ENCODE measurements at regions of chrX and their contacts with region 1.

Region 1: DNA sequence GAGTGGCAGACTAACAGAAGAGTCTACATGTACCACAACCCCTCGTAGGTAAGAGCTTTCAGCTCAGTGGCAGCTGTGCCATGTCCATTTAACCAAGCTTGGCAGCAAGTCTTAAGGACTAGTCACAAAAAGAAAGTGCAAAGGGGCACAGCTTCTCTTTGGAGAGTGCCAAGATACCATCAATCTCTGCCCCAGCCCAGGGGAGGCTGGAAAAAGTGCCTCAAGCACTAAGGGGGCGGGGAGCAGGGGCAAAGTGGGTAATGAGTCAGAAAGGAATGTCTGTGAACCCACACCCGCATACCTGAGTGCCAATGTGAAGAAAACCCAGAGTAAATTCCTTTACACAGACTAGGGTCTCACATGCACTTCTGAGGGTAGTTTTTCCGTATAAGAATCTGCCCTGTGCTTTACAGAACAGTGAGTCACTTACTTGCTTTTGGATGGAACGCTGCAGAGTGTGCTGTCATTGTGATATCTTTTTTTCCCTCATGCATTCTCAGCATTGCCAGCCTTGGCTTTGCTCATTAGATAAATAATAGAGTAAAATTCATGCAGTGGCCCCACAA is 219.8 kb downstream of the ZNF674 start:
- DNase-seq: peak; percentile 84 to 90
- H3K4me3 ChIP-seq: peak overlapping the region; percentile 11; the same call in 1 of the 2 replicates
- H3K27ac ChIP-seq: peak overlapping the region; percentile 100
- H3K4me1 ChIP-seq: peaks cover 39% of the 10 kb centered on the region
- H3K27me3 ChIP-seq: no peaks in the 10 kb centered on the region
- CTCF ChIP-seq: no peak

Region 2: GRCh38 chrX:45824471-45824870 is 500.9 kb before region 1 on chrX:
- CTCF ChIA-PET with region 1: no interaction called
- POLR2A ChIA-PET with region 1: no interaction called
- intact Hi-C with region 1: loop called (anchors 1 kb)
- DNase-seq: peak; percentile 72 to 87
- H3K4me3 ChIP-seq: no peak overlapping the region
- H3K27ac ChIP-seq: peak overlapping the region; percentile 64
- H3K4me1 ChIP-seq: peaks cover 13% of the 10 kb centered on the region; the same call in 1 of the 2 replicates
- H3K27me3 ChIP-seq: no peaks in the 10 kb centered on the region
- CTCF ChIP-seq: peak; percentile 57

Region 3: DNA sequence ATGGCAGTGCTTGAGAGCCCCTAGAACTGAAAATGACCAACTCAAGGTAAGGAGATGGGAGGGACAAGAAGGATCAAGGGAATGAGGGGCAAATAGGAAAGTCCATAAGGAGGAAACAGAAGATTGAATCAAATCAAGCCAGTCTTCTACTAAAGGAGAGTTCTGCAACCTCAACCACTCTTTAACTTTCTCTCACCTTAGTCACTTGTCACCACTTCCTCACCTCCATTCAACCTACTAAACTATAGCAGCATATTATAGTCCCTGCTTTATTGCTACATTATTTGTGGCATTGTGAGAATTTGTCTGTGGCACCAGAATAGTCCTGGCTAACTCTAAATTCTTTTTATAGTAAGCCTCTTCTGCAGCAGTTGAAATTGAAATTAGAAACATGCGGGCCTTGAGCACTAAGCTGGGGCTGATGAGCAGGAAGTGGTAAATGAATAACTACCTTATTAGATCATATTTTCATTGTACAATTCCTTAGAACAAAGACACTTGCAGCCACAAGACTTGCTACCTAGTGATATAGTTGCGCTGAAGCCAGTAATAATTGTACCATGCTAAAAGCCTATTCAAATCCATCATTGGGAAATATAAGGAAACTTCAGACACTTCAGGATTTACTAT is 117.1 kb before region 1 on chrX:
- CTCF ChIA-PET with region 1: no interaction called
- POLR2A ChIA-PET with region 1: no interaction called
- intact Hi-C with region 1: loop called (anchors 2 kb)
- DNase-seq: peak in 1 of 2 experiments; percentile 83
- H3K4me3 ChIP-seq: no peak overlapping the region
- H3K27ac ChIP-seq: peak overlapping the region; percentile 93
- H3K4me1 ChIP-seq: peaks cover 29% of the 10 kb centered on the region
- H3K27me3 ChIP-seq: no peaks in the 10 kb centered on the region
- CTCF ChIP-seq: no peak

Region 4: GRCh38 chrX:46268429-46268828 is 57.0 kb before region 1 on chrX:
- CTCF ChIA-PET with region 1: no interaction called
- POLR2A ChIA-PET with region 1: interaction called, 26 read pairs
- intact Hi-C with region 1: no loop called
- DNase-seq: peak; percentile 18 to 78
- H3K4me3 ChIP-seq: no peak overlapping the region
- H3K27ac ChIP-seq: peak overlapping the region; percentile 86
- H3K4me1 ChIP-seq: peaks cover 12% of the 10 kb centered on the region; the same call in 1 of the 2 replicates
- H3K27me3 ChIP-seq: no peaks in the 10 kb centered on the region
- CTCF ChIP-seq: no peak

Region 5: GRCh38 chrX:46376246-46376885 is 51.0 kb after region 1 on chrX:
- CTCF ChIA-PET with region 1: interaction called, 3 read pairs
- POLR2A ChIA-PET with region 1: interaction called, 6 read pairs
- intact Hi-C with region 1: loop called (anchors 1 kb)
- DNase-seq: peak; percentile 26 to 48
- H3K4me3 ChIP-seq: 0 out of 2 replicates have a peak overlapping the region, but pooled peaks have one; percentile 5
- H3K27ac ChIP-seq: peak overlapping the region; percentile 94
- H3K4me1 ChIP-seq: peaks cover 25% of the 10 kb centered on the region
- H3K27me3 ChIP-seq: no peaks in the 10 kb centered on the region
- CTCF ChIP-seq: peak; percentile 46; the same call in 1 of the 2 replicates

Measured in PC-9 (cell line).